Activated naive CD4-positive, alpha-beta T cell treated with anti-CD3 and anti-CD28 coated beads for 36 hours (primary cell): ENCODE measurements at regions of chr1 and their contacts with region 1.

Region 1: DNA sequence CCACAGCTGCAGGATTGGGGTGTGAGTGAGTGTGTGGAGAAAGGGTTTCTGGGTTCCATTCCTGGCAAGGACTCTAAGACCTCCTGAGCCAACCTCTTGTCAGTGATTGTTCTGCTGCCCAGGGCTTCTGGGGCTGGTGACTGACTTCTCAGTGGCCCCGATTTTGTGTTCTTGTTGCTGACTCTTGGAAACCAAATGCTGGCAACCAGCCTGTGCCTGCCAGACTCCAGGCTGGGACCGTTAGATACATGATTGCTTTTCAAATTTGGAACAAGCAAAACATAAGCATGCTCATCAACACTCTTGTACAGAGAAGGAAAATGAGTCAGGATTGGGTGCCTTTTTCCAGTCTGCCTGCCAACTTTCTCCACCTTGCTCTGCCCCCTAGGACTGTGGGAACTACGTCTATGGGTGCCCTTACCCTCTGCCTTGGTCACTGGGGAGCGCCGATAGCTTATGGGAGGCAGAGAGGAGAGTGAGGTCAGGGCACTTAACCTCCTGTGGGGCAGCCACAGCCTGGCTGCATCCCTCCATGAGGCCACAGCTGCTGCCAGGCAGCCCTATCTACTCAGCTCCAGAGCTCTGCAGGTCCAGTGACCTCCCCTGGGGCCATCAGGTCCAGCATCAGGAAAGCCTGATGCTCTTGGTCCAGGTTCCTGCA is 39.3 kb upstream of the EPS8L3 start:
- DNase-seq: peak; percentile 29
- H3K4me3 Mint-ChIP-seq: peak overlapping the region; percentile 36
- H3K27ac Mint-ChIP-seq: peak overlapping the region; percentile 73
- H3K4me1 Mint-ChIP-seq: peaks cover 50% of the 10 kb centered on the region
- H3K27me3 Mint-ChIP-seq: no peaks in the 10 kb centered on the region

Region 2: DNA sequence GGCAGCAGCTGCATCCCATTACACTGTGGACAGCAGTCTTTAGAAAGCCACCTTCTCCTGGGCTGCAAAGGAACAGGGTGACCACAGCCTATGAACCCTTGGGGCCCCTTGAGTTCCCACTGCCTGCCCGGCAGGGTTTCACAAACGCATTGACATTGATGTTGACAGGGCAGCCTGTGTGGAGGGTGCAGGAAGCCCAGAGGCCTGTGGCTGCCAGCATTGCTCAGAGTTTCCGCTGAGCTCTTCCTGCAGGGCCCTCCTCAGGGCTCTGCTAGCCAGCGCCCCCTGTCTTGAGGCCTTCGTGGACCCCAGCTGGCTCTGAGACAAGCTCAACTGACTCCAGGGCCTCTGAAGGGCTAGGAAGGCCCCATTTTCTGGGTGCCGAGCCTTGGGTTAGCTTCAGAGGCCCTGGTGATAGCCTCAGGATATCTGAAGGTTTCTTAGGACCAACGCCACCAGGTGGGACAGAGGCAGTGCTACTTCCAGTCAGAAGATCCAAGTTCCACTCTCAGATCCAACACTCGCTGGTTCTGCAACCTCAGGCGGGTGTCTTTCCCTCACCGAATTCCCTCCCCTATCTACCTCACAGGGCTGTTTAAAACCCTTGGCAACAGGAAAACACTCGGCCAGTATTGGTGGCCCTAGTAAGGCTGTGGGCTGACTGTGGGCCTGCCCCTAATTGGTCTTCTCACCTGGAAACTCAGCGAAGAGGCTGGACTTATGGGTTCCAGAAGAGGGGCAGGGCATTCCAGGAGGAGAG is 12.1 kb before region 1 on chr1:
- CTCF ChIA-PET with region 1: interaction called, 37 read pairs
- intact Hi-C with region 1: loop called (anchors 1 kb)
- DNase-seq: peak; percentile 91
- H3K4me3 Mint-ChIP-seq: no peak overlapping the region
- H3K27ac Mint-ChIP-seq: peak overlapping the region; percentile 81
- H3K4me1 Mint-ChIP-seq: peaks cover 57% of the 10 kb centered on the region
- H3K27me3 Mint-ChIP-seq: no peaks in the 10 kb centered on the region

Region 3: GRCh38 chr1:109850194-109850593 is 47.2 kb after region 1 on chr1:
- CTCF ChIA-PET with region 1: no interaction called
- intact Hi-C with region 1: no loop called
- DNase-seq: no peak
- H3K4me3 Mint-ChIP-seq: no peak overlapping the region
- H3K27ac Mint-ChIP-seq: no peak overlapping the region
- H3K4me1 Mint-ChIP-seq: peaks cover 10% of the 10 kb centered on the region
- H3K27me3 Mint-ChIP-seq: no peaks in the 10 kb centered on the region